Activated CD8-positive, alpha-beta T cell treated with anti-CD3 and anti-CD28 coated beads, Interleukin-2, amount 10 ng/mL, durations not matched to agents 7 days and 5 days (primary cell): ENCODE measurements at regions of chr11 and their contacts with region 1.

Region 1: GRCh38 chr11:1852877-1853276 is at the start of gene LSP1:
- DNase-seq: peak; percentile 93
- ATAC-seq: peak; percentile 63
- H3K4me3 Mint-ChIP-seq: peak within 1 kb of the TSS; percentile 99
- H3K27ac Mint-ChIP-seq: peak within 1 kb of the TSS; percentile 98
- H3K4me1 Mint-ChIP-seq: peaks cover 63% of the 10 kb centered on the region
- H3K27me3 Mint-ChIP-seq: peaks cover 3% of the 10 kb centered on the region
- total RNA-seq, gene LSP1: 463 to 477 TPM

Region 2: DNA sequence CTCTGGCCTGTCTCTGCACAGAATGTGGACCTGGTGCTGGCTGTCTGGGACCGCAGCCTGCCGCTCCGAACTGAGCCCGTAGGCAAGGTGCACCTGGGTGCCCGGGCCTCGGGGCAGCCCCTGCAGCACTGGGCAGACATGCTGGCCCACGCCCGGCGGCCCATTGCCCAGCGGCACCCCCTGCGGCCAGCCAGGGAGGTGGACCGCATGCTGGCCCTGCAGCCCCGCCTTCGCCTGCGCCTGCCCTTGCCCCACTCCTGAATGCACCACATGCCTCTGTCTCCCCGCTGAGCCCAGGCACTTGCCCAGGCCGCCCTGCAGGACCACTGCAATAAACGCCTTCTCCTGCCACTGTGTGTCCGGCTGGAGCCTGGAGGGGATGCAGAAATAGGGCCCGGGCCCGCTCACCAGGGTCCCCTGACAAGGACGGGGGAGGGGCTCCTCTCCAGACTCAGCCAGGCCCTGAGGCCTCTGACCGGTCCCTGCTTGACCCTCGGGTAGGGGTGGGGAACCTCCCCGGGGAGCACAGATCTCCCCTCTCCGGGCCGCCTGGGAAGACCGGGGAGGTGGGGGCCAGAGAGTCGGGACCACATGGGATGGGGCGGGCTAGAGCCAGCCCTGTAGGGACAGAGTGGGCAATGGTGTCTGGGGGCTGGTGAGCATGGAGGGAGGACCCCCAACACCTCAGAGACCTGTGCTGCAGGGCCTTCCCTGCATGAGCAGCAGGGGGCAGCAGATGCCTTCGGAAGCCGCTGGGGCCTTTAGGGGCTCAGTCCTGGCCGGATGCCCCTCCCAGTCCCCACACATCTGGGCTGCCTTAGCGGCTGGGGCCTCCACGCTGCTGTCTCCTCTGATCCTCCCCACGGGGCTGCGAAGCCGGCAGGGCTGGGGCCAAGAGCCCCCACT is 15.5 kb before region 1 on chr11:
- CTCF ChIA-PET with region 1: interaction called, 16 read pairs
- POLR2A ChIA-PET with region 1: interaction called, 15 read pairs
- DNase-seq: peak; percentile 93
- ATAC-seq: peak; percentile 95
- H3K4me3 Mint-ChIP-seq: no peak overlapping the region
- H3K27ac Mint-ChIP-seq: no peak overlapping the region
- H3K4me1 Mint-ChIP-seq: peaks cover 8% of the 10 kb centered on the region
- H3K27me3 Mint-ChIP-seq: peaks cover 4% of the 10 kb centered on the region

Region 3: GRCh38 chr11:1889224-1890120 is 36.6 kb after region 1 on chr11:
- CTCF ChIA-PET with region 1: interaction called, 7 read pairs
- POLR2A ChIA-PET with region 1: interaction called, 16 read pairs
- DNase-seq: peak; percentile 91
- ATAC-seq: peak; percentile 75
- H3K4me3 Mint-ChIP-seq: peak overlapping the region; percentile 70
- H3K27ac Mint-ChIP-seq: peak overlapping the region; percentile 88
- H3K4me1 Mint-ChIP-seq: peaks cover 54% of the 10 kb centered on the region
- H3K27me3 Mint-ChIP-seq: no peaks in the 10 kb centered on the region

Region 4: GRCh38 chr11:2002807-2003206 is 149.9 kb after region 1 on chr11:
- CTCF ChIA-PET with region 1: interaction called, 21 read pairs
- POLR2A ChIA-PET with region 1: no interaction called
- DNase-seq: no peak
- ATAC-seq: peak; percentile 57
- H3K4me3 Mint-ChIP-seq: no peak overlapping the region
- H3K27ac Mint-ChIP-seq: no peak overlapping the region
- H3K4me1 Mint-ChIP-seq: no peaks in the 10 kb centered on the region
- H3K27me3 Mint-ChIP-seq: no peaks in the 10 kb centered on the region